ENCODE measurements at regions of chr6 and their contacts with region 1.

Region 1: GRCh38 chr6:797479-798077 is 104.6 kb upstream of the EXOC2 start:
- DNase-seq: peak; percentile 45
- ATAC-seq: peak; percentile 68
- H3K4me3 ChIP-seq: no peak overlapping the region
- H3K27ac ChIP-seq: no peak overlapping the region
- H3K4me1 ChIP-seq: no peaks in the 10 kb centered on the region
- H3K27me3 ChIP-seq: peaks cover 4 to 57% of the 10 kb centered on the region in 2 experiments
- CTCF ChIP-seq: peak; percentile 83
- EP300 ChIP-seq: no peak
- POLR2A ChIP-seq: no peak
- RAD21 ChIP-seq: peak; percentile 77

Region 2: DNA sequence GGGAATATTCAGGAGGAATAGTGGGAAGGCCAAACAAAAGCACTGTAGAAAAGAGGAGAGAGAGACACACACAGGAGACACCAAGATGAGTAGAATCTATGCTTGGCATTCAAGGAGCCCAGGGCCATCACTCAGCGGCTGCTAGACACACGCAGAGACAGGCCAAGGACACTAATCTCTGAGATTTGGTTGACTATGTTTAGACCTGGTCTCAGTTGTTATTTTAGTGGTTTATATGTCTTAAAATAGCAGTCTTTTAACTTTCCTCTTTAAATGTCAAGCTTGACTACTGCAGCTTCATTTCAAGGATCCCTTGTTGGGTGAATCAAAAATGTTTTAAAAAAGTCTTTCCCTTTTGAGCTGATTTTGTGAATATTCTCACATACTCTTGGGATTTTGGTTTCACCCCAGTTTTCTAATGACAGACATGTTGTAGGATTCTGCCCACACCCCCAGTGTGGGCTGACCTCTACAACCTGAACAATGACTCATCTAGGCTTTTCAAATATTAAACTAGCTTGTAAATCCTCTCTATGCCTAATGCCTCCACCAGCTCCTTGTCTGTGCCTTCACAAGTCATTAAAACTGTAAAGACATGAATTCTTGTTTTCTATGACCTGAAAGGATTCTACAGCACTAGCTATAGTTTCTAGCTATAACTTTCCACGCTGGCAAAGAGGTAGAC is 38.0 kb after region 1 on chr6:
- CTCF ChIA-PET with region 1: no interaction called
- POLR2A ChIA-PET with region 1: no interaction called
- in situ Hi-C with region 1: no loop called
- intact Hi-C with region 1: no loop called
- DNase-seq: no peak
- ATAC-seq: peak; percentile 48; the same call in 1 of the 3 replicates
- H3K4me3 ChIP-seq: no peak overlapping the region
- H3K27ac ChIP-seq: no peak overlapping the region
- H3K4me1 ChIP-seq: peaks cover 33% of the 10 kb centered on the region
- H3K27me3 ChIP-seq: peaks cover 1 to 4% of the 10 kb centered on the region in 2 experiments; a peak in 1 of 5 replicates
- CTCF ChIP-seq: no peak
- EP300 ChIP-seq: no peak
- POLR2A ChIP-seq: no peak
- RAD21 ChIP-seq: no peak

Region 3: DNA sequence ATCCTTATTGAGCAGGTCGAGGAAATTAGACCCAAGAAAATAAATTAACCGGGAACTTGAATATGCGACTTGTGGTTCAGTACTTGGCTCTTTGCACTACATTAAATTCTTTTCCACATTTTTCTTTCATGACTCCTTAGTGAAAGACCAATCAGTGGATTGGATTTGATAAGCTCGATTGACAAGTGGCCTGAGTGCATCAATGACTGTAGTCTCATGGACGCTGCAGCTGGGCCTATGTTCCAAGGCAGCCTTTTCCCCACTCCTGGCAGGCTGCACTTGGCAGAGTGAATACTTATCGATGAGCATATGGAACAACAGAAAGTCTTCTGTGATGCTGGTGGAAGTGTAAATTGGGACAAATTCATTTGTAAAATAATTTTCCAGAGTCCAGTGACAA is 106.2 kb after region 1 on chr6:
- CTCF ChIA-PET with region 1: no interaction called
- POLR2A ChIA-PET with region 1: interaction called, 6 read pairs
- in situ Hi-C with region 1: no loop called
- intact Hi-C with region 1: loop called (anchors 10 kb)
- DNase-seq: no peak
- ATAC-seq: no peak
- H3K4me3 ChIP-seq: no peak overlapping the region
- H3K27ac ChIP-seq: no peak overlapping the region
- H3K4me1 ChIP-seq: peaks cover 30% of the 10 kb centered on the region
- H3K27me3 ChIP-seq: peaks cover 2 to 15% of the 10 kb centered on the region in 2 experiments; a peak in 2 of 5 replicates
- CTCF ChIP-seq: no peak
- EP300 ChIP-seq: no peak
- POLR2A ChIP-seq: no peak
- RAD21 ChIP-seq: no peak

Region 4: GRCh38 chr6:1335367-1336037 is 537.9 kb after region 1 on chr6:
- CTCF ChIA-PET with region 1: interaction called, 33 read pairs
- POLR2A ChIA-PET with region 1: interaction called, 3 read pairs
- in situ Hi-C with region 1: no loop called
- intact Hi-C with region 1: loop called (anchors 1 kb)
- DNase-seq: peak; percentile 98
- ATAC-seq: peak; percentile 93
- H3K4me3 ChIP-seq: peak overlapping the region; percentile 20 to 65 (median 31)
- H3K27ac ChIP-seq: peak overlapping the region; percentile 73
- H3K4me1 ChIP-seq: peaks cover 48% of the 10 kb centered on the region
- H3K27me3 ChIP-seq: peaks cover 0 to 10% of the 10 kb centered on the region in 2 experiments; a peak in 1 of 5 replicates
- CTCF ChIP-seq: peak; percentile 41
- EP300 ChIP-seq: peak; percentile 89 to 93
- POLR2A ChIP-seq: peak in 1 of 2 experiments; percentile 52; a peak in 3 of 4 replicates
- RAD21 ChIP-seq: peak; percentile 52; the same call in 1 of the 2 replicates

Region 5: GRCh38 chr6:1381481-1382330 is 584.1 kb after region 1 on chr6:
- CTCF ChIA-PET with region 1: interaction called, 42 read pairs
- POLR2A ChIA-PET with region 1: no interaction called
- in situ Hi-C with region 1: loop called (anchors 5 kb)
- intact Hi-C with region 1: loop called (anchors 1 kb)
- DNase-seq: no peak
- ATAC-seq: peak; percentile 86
- H3K4me3 ChIP-seq: peak overlapping the region; percentile 45 to 65 (median 46); a peak in 5 of 6 replicates
- H3K27ac ChIP-seq: no peak overlapping the region
- H3K4me1 ChIP-seq: peaks cover 21% of the 10 kb centered on the region; the same call in 1 of the 2 replicates
- H3K27me3 ChIP-seq: peaks cover 42 to 96% of the 10 kb centered on the region in 2 experiments
- CTCF ChIP-seq: peak; percentile 90
- EP300 ChIP-seq: no peak
- POLR2A ChIP-seq: no peak
- RAD21 ChIP-seq: peak; percentile 100

Region 6: DNA sequence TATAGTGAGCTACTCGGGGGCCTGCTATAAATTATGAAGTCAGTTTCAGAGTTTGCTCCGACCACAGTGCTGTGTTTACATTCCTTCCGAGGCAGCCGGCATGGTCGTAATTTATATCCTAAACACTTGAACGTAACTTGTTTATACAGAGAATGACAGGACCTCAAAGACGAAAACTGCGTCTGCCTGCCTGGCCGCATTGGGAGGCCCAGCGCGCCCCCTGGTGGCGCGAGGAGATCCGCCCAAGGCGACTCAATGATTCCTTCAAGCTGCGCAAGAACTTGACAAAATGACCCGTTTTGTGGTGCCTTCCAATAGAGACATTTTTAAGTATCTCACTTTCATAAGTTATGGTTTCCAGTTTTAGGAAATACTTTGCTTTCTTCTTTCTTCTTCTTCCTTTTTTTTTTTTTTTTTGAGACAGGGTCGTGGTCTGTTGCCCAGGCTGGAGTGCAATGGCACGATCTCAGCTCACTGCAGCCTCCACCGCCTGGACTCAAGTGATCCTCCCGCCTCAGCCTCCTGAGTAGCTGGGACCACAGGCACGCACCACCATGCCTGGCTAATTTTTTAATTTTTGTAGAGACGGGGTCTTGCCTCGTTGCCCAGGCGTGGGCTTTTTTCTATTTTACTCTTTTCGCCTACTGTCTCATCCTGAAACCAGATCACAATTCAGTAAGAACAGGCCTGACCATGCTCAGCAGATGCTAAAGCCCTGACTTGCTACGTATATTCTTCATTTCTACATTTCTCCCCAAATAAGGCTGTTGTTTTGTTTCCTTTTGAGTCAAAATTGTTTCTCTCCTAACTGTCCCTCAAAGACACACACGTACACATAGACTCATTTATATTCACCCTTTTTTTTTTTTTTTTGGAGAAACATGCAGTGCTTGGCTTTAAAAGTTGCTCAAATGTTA is 599.6 kb after region 1 on chr6:
- CTCF ChIA-PET with region 1: interaction called, 19 read pairs
- POLR2A ChIA-PET with region 1: no interaction called
- in situ Hi-C with region 1: no loop called
- intact Hi-C with region 1: loop called (anchors 1 kb)
- DNase-seq: peak; percentile 31
- ATAC-seq: peak; percentile 67
- H3K4me3 ChIP-seq: no peak overlapping the region
- H3K27ac ChIP-seq: no peak overlapping the region
- H3K4me1 ChIP-seq: no peaks in the 10 kb centered on the region
- H3K27me3 ChIP-seq: peaks cover 35 to 93% of the 10 kb centered on the region in 2 experiments; a peak in 4 of 5 replicates
- CTCF ChIP-seq: peak; percentile 91
- EP300 ChIP-seq: no peak
- POLR2A ChIP-seq: no peak
- RAD21 ChIP-seq: peak; percentile 79

Region 7: GRCh38 chr6:1436334-1437306 is 639.0 kb after region 1 on chr6:
- CTCF ChIA-PET with region 1: interaction called, 3 read pairs
- POLR2A ChIA-PET with region 1: no interaction called
- in situ Hi-C with region 1: no loop called
- intact Hi-C with region 1: loop called (anchors 1 kb)
- DNase-seq: peak; percentile 67
- ATAC-seq: peak; percentile 98
- H3K4me3 ChIP-seq: no peak overlapping the region
- H3K27ac ChIP-seq: no peak overlapping the region
- H3K4me1 ChIP-seq: no peaks in the 10 kb centered on the region
- H3K27me3 ChIP-seq: peaks cover 10 to 47% of the 10 kb centered on the region in 2 experiments
- CTCF ChIP-seq: peak; percentile 84
- EP300 ChIP-seq: no peak
- POLR2A ChIP-seq: no peak
- RAD21 ChIP-seq: peak; percentile 84